ENCODE measurements at regions of chr4 and their contacts with region 1.

Region 1: DNA sequence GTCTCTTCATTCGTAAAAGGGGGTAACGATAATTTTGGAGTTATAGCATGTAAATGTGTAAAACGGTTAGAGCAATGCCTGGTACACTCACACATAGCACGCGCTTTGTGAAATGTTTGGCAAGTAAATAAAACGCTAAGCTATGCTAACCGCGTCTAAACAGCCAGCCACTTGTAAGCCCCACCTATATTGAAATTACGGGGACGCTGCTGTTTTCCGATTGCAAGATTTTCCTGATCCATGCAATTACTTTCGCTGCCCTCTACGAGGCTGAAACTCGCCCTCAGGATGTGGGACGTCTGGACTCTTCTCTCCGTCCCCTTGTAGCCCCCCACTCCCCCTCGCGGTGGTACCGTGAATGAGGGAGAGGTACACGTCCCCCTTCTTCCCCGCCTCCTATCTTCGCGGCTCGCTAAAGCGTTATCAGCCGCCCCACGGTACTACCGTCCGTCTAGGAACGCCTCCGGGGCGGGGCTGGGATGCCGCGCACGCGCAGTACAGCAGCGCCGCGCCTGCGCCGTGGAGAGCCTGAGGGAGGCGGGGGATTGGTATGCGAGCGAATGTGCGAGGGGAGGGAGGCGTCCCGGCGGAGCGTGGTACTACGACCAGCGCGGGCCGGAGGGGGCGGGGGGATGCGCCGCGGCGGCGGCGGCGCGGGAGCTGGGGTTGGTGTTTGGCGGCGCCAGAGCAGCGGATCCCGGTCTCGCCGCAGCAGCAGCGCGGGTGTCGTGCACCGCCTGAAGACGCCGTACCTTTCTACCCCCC is at the start of gene STIM2:
- DNase-seq: peak; percentile 84 to 98
- H3K4me3 ChIP-seq: peak within 1 kb of the TSS; percentile 65
- H3K27ac ChIP-seq: peak within 1 kb of the TSS; percentile 67
- H3K4me1 ChIP-seq: peaks cover 26% of the 10 kb centered on the region
- H3K27me3 ChIP-seq: no peaks in the 10 kb centered on the region
- CTCF ChIP-seq: peak; percentile 24; the same call in 1 of the 2 replicates
- total RNA-seq, gene STIM2: 21.8 and 30.2 TPM in 2 replicates

Region 2: DNA sequence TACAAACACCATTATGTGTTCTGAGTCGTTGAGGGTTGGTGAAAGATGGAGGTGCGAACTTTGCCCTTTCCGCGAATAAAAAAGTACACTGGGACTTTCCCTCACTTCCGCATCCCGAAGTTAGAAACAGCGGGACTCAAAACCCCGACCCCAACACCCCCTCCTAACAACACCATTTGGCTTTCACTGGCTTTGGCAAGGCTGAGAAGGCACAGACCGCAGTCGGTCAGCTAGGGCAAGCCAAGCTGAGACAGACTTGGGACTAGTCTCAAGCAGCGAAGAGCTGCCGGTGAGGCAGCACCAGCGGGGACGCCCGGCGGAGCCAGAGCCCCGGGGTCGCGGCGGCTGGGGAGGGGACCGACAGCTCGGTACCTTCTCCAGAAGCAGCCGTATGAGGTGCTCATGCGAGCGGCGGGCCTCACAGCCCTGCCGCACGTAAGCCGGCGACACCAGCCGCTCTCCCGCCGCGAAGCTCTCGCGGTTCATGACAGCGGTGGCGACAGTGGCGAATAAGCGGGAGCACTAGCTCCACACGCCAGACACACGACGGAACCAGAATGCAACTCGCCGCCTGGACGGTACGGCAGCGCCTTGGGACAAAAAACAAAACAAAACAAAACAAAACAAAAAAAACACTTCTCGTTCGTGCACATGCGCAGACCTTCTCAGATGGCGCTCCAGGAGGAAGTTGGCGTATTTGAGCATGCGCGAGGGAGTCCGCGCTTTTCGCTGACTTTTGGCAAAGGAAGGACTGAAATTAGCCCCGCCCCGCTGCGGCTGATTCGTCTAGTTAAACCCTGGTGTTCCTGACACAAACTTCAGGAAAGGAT is 1700.2 kb before region 1 on chr4 and contains the start of gene SEPSECS:
- CTCF ChIA-PET with region 1: no interaction called
- POLR2A ChIA-PET with region 1: no interaction called
- intact Hi-C with region 1: loop called (anchors 5 kb)
- DNase-seq: peak; percentile 93 to 95
- H3K4me3 ChIP-seq: peak within 1 kb of the TSS; percentile 74
- H3K27ac ChIP-seq: peak within 1 kb of the TSS; percentile 72
- H3K4me1 ChIP-seq: peaks cover 26% of the 10 kb centered on the region
- H3K27me3 ChIP-seq: no peaks in the 10 kb centered on the region
- CTCF ChIP-seq: no peak
- total RNA-seq, gene SEPSECS: 9.1 and 11.3 TPM in 2 replicates

Region 3: DNA sequence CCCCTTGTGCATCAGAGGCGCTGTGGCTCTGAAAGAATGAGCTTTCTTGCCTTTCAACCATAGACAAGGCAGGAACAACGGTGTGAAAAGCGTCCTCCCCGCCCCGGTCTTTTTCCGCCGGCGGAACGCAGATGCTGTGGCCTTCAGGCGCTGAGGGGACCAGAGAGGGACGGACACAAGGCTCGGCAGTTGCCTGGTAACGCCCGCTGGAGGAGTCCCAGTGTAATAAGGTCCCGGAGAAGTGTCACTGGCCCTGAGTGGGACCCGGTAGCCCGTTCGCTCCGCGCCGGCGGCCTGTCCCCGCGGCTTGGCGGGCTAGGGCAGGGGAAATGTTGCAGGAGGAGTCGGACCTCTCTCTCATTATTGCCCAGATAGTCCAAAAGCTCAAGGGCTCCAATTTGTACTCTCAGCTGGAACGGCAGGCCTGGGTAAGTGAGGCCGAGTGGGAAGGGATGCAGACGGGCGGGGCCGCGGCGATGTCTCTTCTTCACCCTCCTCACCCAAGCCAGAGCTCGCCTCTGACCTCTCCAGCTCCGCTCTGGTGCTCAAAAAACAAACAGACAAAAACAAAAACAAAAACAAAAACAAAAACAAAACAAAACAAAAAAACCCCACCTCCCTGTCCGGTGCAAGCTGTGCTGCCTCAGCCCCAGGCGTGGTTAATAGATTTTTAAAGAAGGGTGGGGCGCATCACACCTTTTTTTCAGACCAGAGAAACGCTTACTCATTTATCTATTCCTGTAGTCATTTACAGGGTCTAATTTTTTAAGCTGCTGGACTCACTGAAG is 276.3 kb before region 1 on chr4 and contains the start of gene TBC1D19:
- CTCF ChIA-PET with region 1: no interaction called
- POLR2A ChIA-PET with region 1: no interaction called
- intact Hi-C with region 1: loop called (anchors 10 kb)
- DNase-seq: peak; percentile 79 to 88
- H3K4me3 ChIP-seq: peak within 1 kb of the TSS; percentile 79
- H3K27ac ChIP-seq: peak within 1 kb of the TSS; percentile 48
- H3K4me1 ChIP-seq: peaks cover 6% of the 10 kb centered on the region; the same call in 1 of the 2 replicates
- H3K27me3 ChIP-seq: no peaks in the 10 kb centered on the region
- CTCF ChIP-seq: no peak
- total RNA-seq, gene TBC1D19: 12.6 and 12.8 TPM in 2 replicates

Region 4: GRCh38 chr4:26719954-26720552 is 140.3 kb before region 1 on chr4:
- CTCF ChIA-PET with region 1: no interaction called
- POLR2A ChIA-PET with region 1: no interaction called
- intact Hi-C with region 1: loop called (anchors 10 kb)
- DNase-seq: no peak
- H3K4me3 ChIP-seq: no peak overlapping the region
- H3K27ac ChIP-seq: no peak overlapping the region
- H3K4me1 ChIP-seq: no peaks in the 10 kb centered on the region
- H3K27me3 ChIP-seq: no peaks in the 10 kb centered on the region
- CTCF ChIP-seq: peak; percentile 74

Region 5: GRCh38 chr4:26916195-26916594 is 55.9 kb after region 1 on chr4:
- CTCF ChIA-PET with region 1: no interaction called
- POLR2A ChIA-PET with region 1: interaction called, 19 read pairs
- intact Hi-C with region 1: no loop called
- DNase-seq: no peak
- H3K4me3 ChIP-seq: no peak overlapping the region
- H3K27ac ChIP-seq: no peak overlapping the region
- H3K4me1 ChIP-seq: no peaks in the 10 kb centered on the region
- H3K27me3 ChIP-seq: no peaks in the 10 kb centered on the region
- CTCF ChIP-seq: no peak

Region 6: DNA sequence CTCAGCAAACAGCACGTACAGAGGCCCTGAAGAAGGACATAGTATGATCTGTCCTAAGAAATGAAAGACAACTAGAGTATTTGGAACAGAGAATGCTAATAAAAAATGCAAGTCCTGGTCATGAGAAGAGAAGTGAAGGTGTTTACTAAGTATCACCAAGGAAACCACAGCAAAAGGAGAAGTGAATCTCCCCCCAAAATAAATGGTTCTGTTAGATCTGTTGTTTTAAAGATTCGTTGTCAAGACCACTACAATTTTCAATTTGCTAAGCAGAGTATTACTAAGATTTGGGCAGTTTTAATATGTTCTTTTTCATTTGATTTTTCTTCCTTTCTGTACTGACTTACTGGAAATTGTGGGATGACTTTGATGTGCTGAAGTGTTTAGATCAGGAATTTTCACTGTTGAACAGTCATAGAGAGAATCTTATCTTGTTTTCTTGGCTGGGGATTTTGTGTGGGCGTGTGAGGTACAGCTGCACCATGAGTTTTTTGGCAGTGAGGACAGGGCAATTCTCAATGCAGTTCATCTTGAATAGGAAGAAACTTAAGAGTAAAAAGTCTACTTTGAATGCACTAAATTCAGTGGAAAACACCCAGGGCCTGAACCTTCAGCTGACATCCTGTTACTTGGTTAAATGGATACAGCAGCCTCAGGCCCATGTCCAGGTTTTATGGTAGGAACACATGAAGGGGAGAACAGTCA is 132.5 kb after region 1 on chr4:
- CTCF ChIA-PET with region 1: no interaction called
- POLR2A ChIA-PET with region 1: no interaction called
- intact Hi-C with region 1: no loop called
- DNase-seq: no peak
- H3K4me3 ChIP-seq: no peak overlapping the region
- H3K27ac ChIP-seq: no peak overlapping the region
- H3K4me1 ChIP-seq: no peaks in the 10 kb centered on the region
- H3K27me3 ChIP-seq: no peaks in the 10 kb centered on the region
- CTCF ChIP-seq: no peak

Region 7: DNA sequence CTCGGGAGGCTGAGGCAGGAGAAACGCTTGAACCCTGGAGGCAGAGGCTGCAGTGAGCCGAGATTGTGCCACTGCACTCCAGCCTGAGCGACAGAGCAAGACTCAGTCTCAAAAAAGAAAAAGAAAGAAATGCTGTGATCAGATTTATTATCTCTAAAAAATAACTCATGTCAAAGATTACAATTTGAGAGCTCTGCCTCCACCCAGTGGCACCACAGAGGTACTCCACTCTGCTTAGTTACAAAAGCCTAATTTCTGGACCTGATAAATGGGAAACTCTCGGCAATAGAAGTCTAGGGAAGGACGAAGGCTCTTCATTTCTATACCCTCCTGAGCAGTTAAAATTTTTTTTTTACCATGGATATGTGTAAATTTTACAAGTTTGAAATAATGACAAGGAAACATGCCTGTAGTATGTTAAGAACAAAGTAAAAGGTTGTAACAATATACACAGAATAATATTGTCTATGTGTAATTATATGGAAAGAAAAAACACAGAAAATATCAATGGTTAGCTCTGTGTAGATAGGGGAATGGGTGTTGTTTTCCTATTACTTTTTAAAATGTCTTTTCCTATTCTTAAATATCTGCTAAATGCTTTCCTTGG is 150.1 kb after region 1 on chr4:
- CTCF ChIA-PET with region 1: no interaction called
- POLR2A ChIA-PET with region 1: no interaction called
- intact Hi-C with region 1: loop called (anchors 5 kb)
- DNase-seq: peak; percentile 37 to 42
- H3K4me3 ChIP-seq: no peak overlapping the region
- H3K27ac ChIP-seq: no peak overlapping the region
- H3K4me1 ChIP-seq: peaks cover 17% of the 10 kb centered on the region
- H3K27me3 ChIP-seq: no peaks in the 10 kb centered on the region
- CTCF ChIP-seq: peak; percentile 81

Region 8: DNA sequence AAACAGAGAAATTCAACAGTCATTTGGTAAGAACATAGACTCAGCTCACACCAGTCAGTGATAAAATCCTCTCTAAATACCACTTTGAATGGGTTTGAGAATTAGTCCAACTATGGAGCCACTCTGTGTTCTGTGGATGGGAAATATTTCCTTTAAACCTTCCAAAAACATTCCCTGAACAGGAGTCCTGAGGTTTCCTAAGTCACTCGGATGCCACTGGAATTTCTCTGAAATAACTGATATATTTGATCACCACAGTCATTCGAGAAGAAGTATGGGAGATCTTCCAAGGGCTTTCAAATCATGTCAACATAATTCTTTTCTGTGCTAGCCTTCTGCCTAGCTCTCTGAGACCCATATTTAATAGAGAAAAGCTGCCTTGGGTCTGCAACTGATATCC is 958.9 kb after region 1 on chr4:
- CTCF ChIA-PET with region 1: no interaction called
- POLR2A ChIA-PET with region 1: no interaction called
- intact Hi-C with region 1: no loop called
- DNase-seq: no peak
- H3K4me3 ChIP-seq: no peak overlapping the region
- H3K27ac ChIP-seq: no peak overlapping the region
- H3K4me1 ChIP-seq: no peaks in the 10 kb centered on the region
- H3K27me3 ChIP-seq: no peaks in the 10 kb centered on the region
- CTCF ChIP-seq: no peak